ENCODE measurements at regions of chr12 and their contacts with region 1.

Region 1: DNA sequence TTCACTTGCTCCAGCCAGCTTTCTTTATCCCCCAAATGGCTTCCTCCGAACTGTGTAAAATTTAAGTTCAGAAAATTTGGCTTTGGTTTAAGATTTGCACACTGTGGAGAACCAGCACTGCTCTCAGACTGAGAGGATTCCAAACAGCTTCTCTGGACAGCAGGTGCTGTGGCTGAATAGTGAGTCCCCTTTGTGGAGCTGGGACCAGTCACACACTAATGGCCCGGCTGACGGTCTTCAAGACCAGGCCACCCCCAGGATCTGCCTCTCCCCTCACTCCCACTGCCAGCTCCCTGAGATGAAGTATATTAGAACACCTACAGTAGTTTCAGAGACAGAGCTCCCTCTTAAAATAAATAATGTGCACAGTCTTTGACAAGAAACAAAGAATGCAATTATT is 267.3 kb downstream of the BCAT1 start:
- DNase-seq: no peak
- ATAC-seq: no peak
- H3K4me3 Mint-ChIP-seq: no peak overlapping the region
- H3K27ac Mint-ChIP-seq: no peak overlapping the region
- H3K4me1 Mint-ChIP-seq: no peaks in the 10 kb centered on the region
- H3K27me3 Mint-ChIP-seq: no peaks in the 10 kb centered on the region
- CTCF ChIP-seq: no peak

Region 2: DNA sequence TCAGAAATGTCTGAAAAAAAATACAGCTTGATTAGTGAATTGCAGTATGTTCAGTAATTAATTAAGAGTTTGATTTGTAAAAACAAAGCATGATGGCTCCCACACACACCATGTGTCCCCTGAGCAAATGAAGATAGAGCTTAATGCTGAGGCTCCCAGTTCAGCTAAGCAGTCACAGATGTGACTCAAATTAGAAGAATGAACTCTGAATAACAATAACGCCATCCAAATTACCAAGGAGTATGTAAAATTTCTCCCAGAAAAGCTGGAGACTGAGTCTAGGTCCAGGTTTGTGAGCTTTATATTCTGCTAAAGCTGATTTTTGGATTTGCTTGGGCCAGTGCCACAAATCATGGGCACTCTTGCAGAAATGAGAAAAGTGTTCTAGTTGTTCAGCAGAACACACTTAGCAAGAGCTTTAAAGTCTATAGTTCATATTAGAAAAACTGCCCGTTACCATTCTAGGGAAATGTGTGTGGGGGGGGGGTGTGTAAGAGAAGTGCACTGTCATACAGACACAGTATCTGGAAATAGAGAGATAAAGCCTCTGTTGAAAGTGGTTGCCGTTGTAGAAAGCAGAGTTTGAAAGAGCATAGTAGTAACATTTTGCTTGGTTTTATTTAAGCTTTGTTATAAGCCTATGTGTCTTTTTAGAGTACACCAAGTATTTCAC is 14.2 kb after region 1 on chr12:
- CTCF ChIA-PET with region 1: no interaction called
- POLR2A ChIA-PET with region 1: interaction called, 4 read pairs
- intact Hi-C with region 1: loop called (anchors 2 kb)
- DNase-seq: no peak
- ATAC-seq: no peak
- H3K4me3 Mint-ChIP-seq: no peak overlapping the region
- H3K27ac Mint-ChIP-seq: no peak overlapping the region
- H3K4me1 Mint-ChIP-seq: peaks cover 4% of the 10 kb centered on the region
- H3K27me3 Mint-ChIP-seq: no peaks in the 10 kb centered on the region
- CTCF ChIP-seq: no peak